ENCODE measurements at regions of chr5 and their contacts with region 1.

Region 1: GRCh38 chr5:142221091-142221860 is 103.5 kb downstream of the SPRY4 start:
- DNase-seq: no peak
- H3K4me3 ChIP-seq: no peak overlapping the region
- H3K27ac ChIP-seq: no peak overlapping the region
- H3K4me1 ChIP-seq: peaks cover 53% of the 10 kb centered on the region
- H3K27me3 ChIP-seq: no peaks in the 10 kb centered on the region
- CTCF ChIP-seq: no peak

Region 2: GRCh38 chr5:142316051-142316450 is 94.8 kb after region 1 on chr5:
- CTCF ChIA-PET with region 1: interaction called, 11 read pairs
- POLR2A ChIA-PET with region 1: interaction called, 4 read pairs
- intact Hi-C with region 1: no loop called
- DNase-seq: no peak
- H3K4me3 ChIP-seq: no peak overlapping the region
- H3K27ac ChIP-seq: no peak overlapping the region; the same call in 1 of the 2 replicates
- H3K4me1 ChIP-seq: peaks cover 36% of the 10 kb centered on the region
- H3K27me3 ChIP-seq: no peaks in the 10 kb centered on the region
- CTCF ChIP-seq: no peak

Measured in PC-9 (cell line).